HepG2 (cell line): ENCODE measurements at regions of chr7 and their contacts with region 1.

Region 1: GRCh38 chr7:137606061-137606674 is 240.6 kb downstream of the DGKI start:
- DNase-seq: peak; percentile 38
- ATAC-seq: no peak; the same call in 2 of the 3 replicates
- H3K4me3 ChIP-seq: no peak overlapping the region
- H3K27ac ChIP-seq: no peak overlapping the region
- H3K4me1 ChIP-seq: no peaks in the 10 kb centered on the region
- H3K27me3 ChIP-seq: peaks cover 1 to 8% of the 10 kb centered on the region in 2 experiments; a peak in 3 of 5 replicates
- CTCF ChIP-seq: no peak
- EP300 ChIP-seq: no peak
- POLR2A ChIP-seq: no peak
- RAD21 ChIP-seq: no peak

Region 2: GRCh38 chr7:136369225-136369624 is 1236.9 kb before region 1 on chr7:
- CTCF ChIA-PET with region 1: no interaction called
- POLR2A ChIA-PET with region 1: no interaction called
- in situ Hi-C with region 1: no loop called
- intact Hi-C with region 1: no loop called
- DNase-seq: no peak
- ATAC-seq: no peak
- H3K4me3 ChIP-seq: no peak overlapping the region
- H3K27ac ChIP-seq: no peak overlapping the region
- H3K4me1 ChIP-seq: no peaks in the 10 kb centered on the region
- H3K27me3 ChIP-seq: no peaks in the 10 kb centered on the region
- CTCF ChIP-seq: no peak
- EP300 ChIP-seq: no peak
- POLR2A ChIP-seq: no peak
- RAD21 ChIP-seq: no peak

Region 3: GRCh38 chr7:137169282-137169698 is 436.9 kb before region 1 on chr7:
- CTCF ChIA-PET with region 1: no interaction called
- POLR2A ChIA-PET with region 1: no interaction called
- in situ Hi-C with region 1: no loop called
- intact Hi-C with region 1: no loop called
- DNase-seq: peak; percentile 26
- ATAC-seq: peak; percentile 93
- H3K4me3 ChIP-seq: no peak overlapping the region
- H3K27ac ChIP-seq: no peak overlapping the region
- H3K4me1 ChIP-seq: no peaks in the 10 kb centered on the region
- H3K27me3 ChIP-seq: 0 out of 5 replicates have a peak, but pooled peaks cover 0 to 4% of the 10 kb centered on the region in 2 experiments
- CTCF ChIP-seq: peak; percentile 81
- EP300 ChIP-seq: no peak
- POLR2A ChIP-seq: no peak
- RAD21 ChIP-seq: peak; percentile 45; the same call in 1 of the 2 replicates

Region 4: GRCh38 chr7:137547485-137547884 is 58.7 kb before region 1 on chr7:
- CTCF ChIA-PET with region 1: no interaction called
- POLR2A ChIA-PET with region 1: no interaction called
- in situ Hi-C with region 1: no loop called
- intact Hi-C with region 1: no loop called
- DNase-seq: no peak
- ATAC-seq: no peak
- H3K4me3 ChIP-seq: no peak overlapping the region
- H3K27ac ChIP-seq: no peak overlapping the region
- H3K4me1 ChIP-seq: peaks cover 13% of the 10 kb centered on the region
- H3K27me3 ChIP-seq: no peaks in the 10 kb centered on the region; a peak in 1 of 5 replicates
- CTCF ChIP-seq: no peak
- EP300 ChIP-seq: no peak
- POLR2A ChIP-seq: no peak
- RAD21 ChIP-seq: no peak

Region 5: DNA sequence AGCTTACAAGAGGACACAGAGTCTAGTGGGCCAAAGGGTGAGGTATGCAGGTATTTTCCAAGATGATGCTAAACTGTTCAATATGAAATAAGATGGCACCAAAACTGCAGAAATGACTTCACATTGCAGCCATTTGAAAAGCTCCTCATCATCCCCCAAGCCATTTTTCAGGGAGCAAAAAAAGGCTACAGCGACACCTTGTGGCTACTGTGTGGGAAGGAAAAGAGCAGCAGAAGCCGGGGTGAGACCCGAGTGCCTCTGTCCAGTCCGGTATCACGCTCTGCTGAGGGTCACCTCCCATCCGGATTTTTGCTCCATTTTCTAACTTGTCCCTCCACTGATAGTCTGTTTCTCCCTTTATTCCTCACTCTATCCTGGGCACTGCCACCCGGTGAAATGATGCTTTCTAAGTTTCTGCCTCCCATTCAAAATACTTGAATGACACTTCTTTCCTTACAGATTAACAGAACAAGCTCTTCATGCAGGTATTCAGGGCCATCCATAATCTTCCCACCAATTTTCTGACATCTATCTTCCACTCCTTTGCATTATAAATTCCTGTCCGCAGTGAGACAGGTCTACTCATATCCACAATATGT is 20.4 kb after region 1 on chr7:
- CTCF ChIA-PET with region 1: interaction called, 16 read pairs
- POLR2A ChIA-PET with region 1: no interaction called
- in situ Hi-C with region 1: no loop called
- intact Hi-C with region 1: loop called (anchors 2 kb)
- DNase-seq: peak; percentile 36
- ATAC-seq: peak; percentile 92
- H3K4me3 ChIP-seq: no peak overlapping the region
- H3K27ac ChIP-seq: no peak overlapping the region
- H3K4me1 ChIP-seq: no peaks in the 10 kb centered on the region
- H3K27me3 ChIP-seq: peaks cover 0 to 12% of the 10 kb centered on the region in 2 experiments; a peak in 1 of 5 replicates
- CTCF ChIP-seq: peak; percentile 76
- EP300 ChIP-seq: no peak
- POLR2A ChIP-seq: no peak
- RAD21 ChIP-seq: peak; percentile 32; the same call in 1 of the 2 replicates